A673 (cell line): ENCODE measurements at regions of chrX and their contacts with region 1.

Region 1: DNA sequence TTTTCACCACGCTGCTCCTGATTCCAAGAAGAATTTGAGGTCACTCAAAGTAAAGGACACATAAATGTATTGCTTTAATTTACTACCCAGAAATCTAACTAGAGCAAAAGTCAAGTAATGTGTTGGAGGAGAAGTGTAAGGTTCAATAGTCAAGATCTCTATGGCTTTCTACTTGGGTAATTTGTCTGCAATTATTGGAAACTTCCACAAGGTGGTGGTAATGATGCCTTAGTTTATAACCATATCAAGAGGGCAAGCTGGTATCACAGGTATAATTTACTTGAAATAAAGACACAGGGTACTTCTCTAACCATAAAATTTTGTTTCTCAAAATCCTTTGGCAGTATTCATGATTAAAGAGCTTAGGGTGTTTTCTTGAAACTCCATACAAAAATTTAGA is 10.2 kb upstream of the GRIA3 start:
- DNase-seq: peak; percentile 6
- H3K4me3 ChIP-seq: no peak overlapping the region
- H3K27ac ChIP-seq: no peak overlapping the region
- H3K4me1 ChIP-seq: no peaks in the 10 kb centered on the region
- H3K27me3 ChIP-seq: no peaks in the 10 kb centered on the region
- CTCF ChIP-seq: peak; percentile 35; the same call in 1 of the 2 replicates

Region 2: GRCh38 chrX:123267220-123267619 is 93.4 kb after region 1 on chrX:
- CTCF ChIA-PET with region 1: no interaction called
- POLR2A ChIA-PET with region 1: no interaction called
- intact Hi-C with region 1: no loop called
- DNase-seq: no peak
- H3K4me3 ChIP-seq: no peak overlapping the region
- H3K27ac ChIP-seq: no peak overlapping the region
- H3K4me1 ChIP-seq: no peaks in the 10 kb centered on the region
- H3K27me3 ChIP-seq: no peaks in the 10 kb centered on the region
- CTCF ChIP-seq: no peak

Region 3: DNA sequence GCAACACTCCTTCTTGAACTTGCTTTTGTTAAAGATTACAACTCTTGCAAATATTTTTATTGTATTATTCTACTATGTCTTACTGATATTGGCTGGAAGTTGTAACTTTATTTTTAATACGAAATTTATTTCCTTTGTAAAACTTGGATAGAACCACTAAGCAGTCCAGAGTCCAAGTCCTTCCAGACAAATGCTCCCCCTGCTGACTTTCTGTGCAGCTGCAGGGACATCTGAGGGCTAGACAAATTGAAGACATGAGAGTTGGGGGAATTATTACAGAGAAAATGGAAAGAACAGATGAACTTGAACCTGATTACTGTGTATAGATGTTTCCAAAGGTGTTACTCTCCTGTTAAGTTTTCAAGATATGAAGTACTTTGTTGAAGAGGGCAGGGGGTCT is 249.0 kb after region 1 on chrX:
- CTCF ChIA-PET with region 1: no interaction called
- POLR2A ChIA-PET with region 1: no interaction called
- intact Hi-C with region 1: loop called (anchors 10 kb)
- DNase-seq: peak; percentile 22
- H3K4me3 ChIP-seq: no peak overlapping the region
- H3K27ac ChIP-seq: no peak overlapping the region
- H3K4me1 ChIP-seq: peaks cover 4% of the 10 kb centered on the region
- H3K27me3 ChIP-seq: peaks cover 3% of the 10 kb centered on the region
- CTCF ChIP-seq: peak; percentile 70